WTC11 (cell line): ENCODE measurements at regions of chr12 and their contacts with region 1.

Region 1: DNA sequence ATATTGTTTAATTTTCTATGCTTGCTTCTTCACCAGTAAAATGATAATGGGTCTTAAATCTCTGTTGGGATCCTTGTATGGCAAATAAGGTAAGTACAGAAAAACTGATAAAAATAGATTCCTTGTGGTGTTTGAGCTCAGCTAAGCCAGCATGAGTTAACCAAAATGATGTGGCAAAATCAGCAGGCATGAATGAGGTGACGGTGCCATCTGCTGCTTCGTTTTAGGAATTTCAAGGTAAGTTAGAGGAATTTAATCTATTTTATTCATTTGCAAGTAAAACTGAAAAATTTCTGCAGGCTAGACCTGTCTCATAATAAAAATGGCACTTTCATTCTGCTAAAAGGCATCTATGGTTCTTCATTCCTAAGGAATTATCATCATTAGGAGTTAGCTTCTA is 10.0 kb upstream of the CLEC7A start:
- DNase-seq: peak; percentile 42
- ATAC-seq: peak; percentile 50; the same call in 1 of the 2 replicates
- H3K4me3 Mint-ChIP-seq: no peak overlapping the region
- H3K27ac Mint-ChIP-seq: no peak overlapping the region
- H3K4me1 Mint-ChIP-seq: peaks cover 5% of the 10 kb centered on the region
- H3K27me3 Mint-ChIP-seq: no peaks in the 10 kb centered on the region
- CTCF ChIP-seq: peak; percentile 37; the same call in 1 of the 2 replicates

Region 2: DNA sequence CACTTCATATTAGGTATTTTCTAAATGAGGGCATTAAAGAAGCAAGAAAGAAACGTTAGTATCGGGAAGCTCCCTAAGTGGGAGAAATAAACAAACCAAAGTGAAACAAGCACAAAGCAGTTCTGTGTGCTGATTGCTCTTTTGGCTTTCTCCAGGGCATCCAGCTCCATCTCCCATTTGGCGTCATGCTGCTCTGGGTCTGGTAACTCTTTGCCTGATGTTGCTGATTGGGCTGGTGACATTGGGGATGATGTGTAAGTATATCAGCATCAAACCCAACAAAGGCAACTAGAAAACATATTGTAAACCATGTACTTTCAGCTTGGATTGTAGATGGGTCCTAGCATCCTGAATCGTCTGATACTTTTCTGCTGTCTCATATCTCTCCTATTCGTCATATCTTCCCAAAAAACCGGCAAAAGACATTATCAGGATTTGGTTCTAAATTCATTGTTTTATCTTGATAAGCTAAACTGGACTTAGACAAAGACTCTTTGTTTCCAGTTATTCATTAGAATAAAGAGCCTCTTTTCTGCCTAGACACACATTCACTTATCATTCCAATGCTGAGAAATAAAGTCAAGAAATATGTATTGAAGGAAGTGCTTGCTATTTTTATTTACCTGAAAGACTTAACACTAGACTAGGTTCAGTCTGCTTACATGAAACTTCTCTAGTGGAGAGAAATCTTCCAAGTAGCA is 127.2 kb before region 1 on chr12:
- CTCF ChIA-PET with region 1: interaction called, 21 read pairs
- POLR2A ChIA-PET with region 1: no interaction called
- DNase-seq: no peak
- ATAC-seq: no peak
- H3K4me3 Mint-ChIP-seq: no peak overlapping the region
- H3K27ac Mint-ChIP-seq: no peak overlapping the region
- H3K4me1 Mint-ChIP-seq: peaks cover 10% of the 10 kb centered on the region
- H3K27me3 Mint-ChIP-seq: no peaks in the 10 kb centered on the region
- CTCF ChIP-seq: no peak

Region 3: GRCh38 chr12:10075451-10075850 is 64.5 kb before region 1 on chr12:
- CTCF ChIA-PET with region 1: no interaction called
- POLR2A ChIA-PET with region 1: no interaction called
- DNase-seq: no peak
- ATAC-seq: no peak
- H3K4me3 Mint-ChIP-seq: no peak overlapping the region
- H3K27ac Mint-ChIP-seq: no peak overlapping the region
- H3K4me1 Mint-ChIP-seq: no peaks in the 10 kb centered on the region; the same call in 1 of the 2 replicates
- H3K27me3 Mint-ChIP-seq: no peaks in the 10 kb centered on the region
- CTCF ChIP-seq: no peak

Region 4: DNA sequence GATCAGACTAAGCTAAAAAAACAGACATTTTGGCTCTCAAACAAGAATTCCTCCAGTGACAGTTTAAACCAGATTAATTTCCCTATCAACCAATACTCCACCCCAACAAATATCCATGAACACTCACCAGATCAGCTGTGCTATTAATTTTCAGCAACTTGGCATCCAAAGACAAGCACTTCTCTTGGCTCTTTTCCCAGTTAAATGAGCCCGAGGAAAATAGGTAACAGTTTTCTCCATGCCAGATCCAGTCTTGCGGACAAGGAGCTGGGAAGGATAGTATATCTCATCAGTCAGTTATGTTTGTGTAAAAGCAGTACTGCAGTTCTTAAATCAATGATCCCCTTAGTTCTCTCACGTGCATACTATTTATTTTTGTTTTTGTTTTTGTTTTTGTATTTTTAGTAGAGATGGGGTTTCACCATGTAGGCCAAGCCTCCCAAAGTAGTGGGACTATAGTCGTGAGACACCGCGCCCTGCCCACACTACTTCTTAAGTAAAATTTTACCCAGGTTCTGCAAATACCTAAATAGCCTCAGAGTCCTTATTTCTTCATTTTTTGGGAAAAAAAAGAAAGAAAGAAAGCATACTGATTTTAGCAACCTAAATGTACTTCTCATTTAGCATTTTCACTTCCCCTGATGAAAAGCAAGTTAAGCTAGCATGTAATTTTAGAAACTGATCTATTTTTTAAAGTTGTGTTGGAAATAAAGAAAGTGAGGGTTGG is 20.8 kb after region 1 on chr12:
- CTCF ChIA-PET with region 1: no interaction called
- POLR2A ChIA-PET with region 1: no interaction called
- DNase-seq: no peak
- ATAC-seq: no peak
- H3K4me3 Mint-ChIP-seq: no peak overlapping the region
- H3K27ac Mint-ChIP-seq: no peak overlapping the region
- H3K4me1 Mint-ChIP-seq: no peaks in the 10 kb centered on the region
- H3K27me3 Mint-ChIP-seq: no peaks in the 10 kb centered on the region
- CTCF ChIP-seq: no peak